GM12878 (cell line): ENCODE measurements at regions of chr2 and their contacts with region 1.

Region 1: GRCh38 chr2:196068271-196069209 is at the start of gene DNAH7:
- DNase-seq: peak; percentile 64
- ATAC-seq: peak; percentile 98
- H3K4me3 ChIP-seq: peak within 1 kb of the TSS; percentile 68
- H3K27ac ChIP-seq: peak within 1 kb of the TSS; percentile 43
- H3K4me1 ChIP-seq: no peaks in the 10 kb centered on the region; the same call in 1 of the 2 replicates
- H3K27me3 ChIP-seq: no peaks in the 10 kb centered on the region
- CTCF ChIP-seq: peak; percentile 91 to 98 (median 97); a peak in 5 of 6 replicates
- EP300 ChIP-seq: no peak; a peak in 1 of 4 replicates
- POLR2A ChIP-seq: peak; percentile 22; the same call in 1 of the 2 replicates
- RAD21 ChIP-seq: peak; percentile 92
- polyA plus RNA-seq, gene DNAH7: 0.05 to 0.14 TPM

Region 2: GRCh38 chr2:195410074-195410671 is 658.4 kb before region 1 on chr2:
- CTCF ChIA-PET with region 1: interaction called, 4 read pairs
- POLR2A ChIA-PET with region 1: no interaction called
- RAD21 ChIA-PET with region 1: no interaction called
- SMC1A ChIA-PET with region 1: no interaction called
- in situ Hi-C with region 1: no loop called
- intact Hi-C with region 1: loop called (anchors 5 kb)
- DNase-seq: peak; percentile 60
- ATAC-seq: peak; percentile 80
- H3K4me3 ChIP-seq: no peak overlapping the region
- H3K27ac ChIP-seq: peak overlapping the region; percentile 29
- H3K4me1 ChIP-seq: no peaks in the 10 kb centered on the region
- H3K27me3 ChIP-seq: no peaks in the 10 kb centered on the region
- CTCF ChIP-seq: no peak
- EP300 ChIP-seq: peak; percentile 68 to 83; a peak in 3 of 4 replicates
- POLR2A ChIP-seq: no peak
- RAD21 ChIP-seq: no peak

Region 3: GRCh38 chr2:195575879-195576401 is 492.6 kb before region 1 on chr2:
- CTCF ChIA-PET with region 1: interaction called, 73 read pairs
- POLR2A ChIA-PET with region 1: interaction called, 6 read pairs
- RAD21 ChIA-PET with region 1: interaction called, 40 read pairs
- SMC1A ChIA-PET with region 1: interaction called, 55 read pairs
- in situ Hi-C with region 1: loop called (anchors 10 kb)
- intact Hi-C with region 1: loop called (anchors 2 kb)
- DNase-seq: no peak
- ATAC-seq: peak; percentile 87
- H3K4me3 ChIP-seq: no peak overlapping the region
- H3K27ac ChIP-seq: no peak overlapping the region
- H3K4me1 ChIP-seq: no peaks in the 10 kb centered on the region; the same call in 1 of the 2 replicates
- H3K27me3 ChIP-seq: no peaks in the 10 kb centered on the region
- CTCF ChIP-seq: peak in 2 of 3 experiments; percentile 12 to 60; a peak in 3 of 6 replicates
- EP300 ChIP-seq: no peak
- POLR2A ChIP-seq: no peak
- RAD21 ChIP-seq: peak; percentile 54

Region 4: DNA sequence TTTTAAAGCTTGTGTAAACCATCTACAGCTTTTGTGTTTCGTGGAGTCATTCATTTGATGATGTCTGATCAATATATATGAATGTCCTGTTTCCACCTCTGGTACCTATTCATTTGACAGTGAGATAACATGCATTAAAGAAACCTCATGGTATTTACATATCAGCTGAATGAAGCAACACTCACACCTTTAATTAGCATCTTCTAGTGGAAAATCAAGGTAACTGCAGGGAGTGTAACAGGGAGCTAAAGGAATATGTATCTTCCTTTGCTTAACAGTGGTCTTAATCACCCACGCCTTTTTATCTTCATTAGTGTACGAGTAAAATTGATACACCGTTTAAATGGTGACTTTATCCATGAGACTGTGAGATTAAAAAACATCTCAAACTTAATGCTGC is 395.9 kb before region 1 on chr2:
- CTCF ChIA-PET with region 1: interaction called, 89 read pairs
- POLR2A ChIA-PET with region 1: no interaction called
- RAD21 ChIA-PET with region 1: interaction called, 32 read pairs
- SMC1A ChIA-PET with region 1: interaction called, 60 read pairs
- in situ Hi-C with region 1: no loop called
- intact Hi-C with region 1: no loop called
- DNase-seq: no peak
- ATAC-seq: no peak
- H3K4me3 ChIP-seq: no peak overlapping the region
- H3K27ac ChIP-seq: no peak overlapping the region
- H3K4me1 ChIP-seq: no peaks in the 10 kb centered on the region
- H3K27me3 ChIP-seq: no peaks in the 10 kb centered on the region
- CTCF ChIP-seq: peak in 2 of 3 experiments; percentile 15 to 22; a peak in 2 of 6 replicates
- EP300 ChIP-seq: no peak
- POLR2A ChIP-seq: no peak
- RAD21 ChIP-seq: no peak

Region 5: DNA sequence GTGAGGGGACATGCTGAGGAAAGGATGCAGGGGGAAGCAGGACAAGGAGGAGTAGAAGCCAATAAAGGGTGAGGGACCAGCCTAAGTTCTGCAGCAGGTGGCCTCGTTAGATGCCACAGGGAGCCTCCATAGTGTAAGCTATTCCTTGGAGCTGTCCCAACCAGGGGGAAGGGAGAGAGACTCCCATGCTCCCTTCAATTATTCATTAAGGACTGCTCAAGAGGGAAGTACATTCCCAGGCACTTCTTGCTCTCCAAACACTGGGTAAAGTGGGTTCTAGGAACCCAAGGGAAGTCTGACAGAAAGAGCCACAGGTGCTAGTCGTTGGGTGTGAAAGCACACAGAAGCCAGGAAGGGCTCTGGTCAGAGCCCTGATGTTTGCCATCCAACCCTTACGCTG is 217.8 kb before region 1 on chr2:
- CTCF ChIA-PET with region 1: interaction called, 5 read pairs
- POLR2A ChIA-PET with region 1: no interaction called
- RAD21 ChIA-PET with region 1: no interaction called
- SMC1A ChIA-PET with region 1: interaction called, 3 read pairs
- in situ Hi-C with region 1: no loop called
- intact Hi-C with region 1: loop called (anchors 5 kb)
- DNase-seq: no peak
- ATAC-seq: no peak
- H3K4me3 ChIP-seq: no peak overlapping the region
- H3K27ac ChIP-seq: no peak overlapping the region
- H3K4me1 ChIP-seq: no peaks in the 10 kb centered on the region
- H3K27me3 ChIP-seq: no peaks in the 10 kb centered on the region
- CTCF ChIP-seq: no peak
- EP300 ChIP-seq: no peak
- POLR2A ChIP-seq: no peak
- RAD21 ChIP-seq: no peak

Region 6: GRCh38 chr2:196046123-196046917 is 22.2 kb before region 1 on chr2:
- CTCF ChIA-PET with region 1: interaction called, 28 read pairs
- POLR2A ChIA-PET with region 1: no interaction called
- RAD21 ChIA-PET with region 1: interaction called, 13 read pairs
- SMC1A ChIA-PET with region 1: interaction called, 16 read pairs
- in situ Hi-C with region 1: no loop called
- intact Hi-C with region 1: no loop called
- DNase-seq: peak; percentile 45
- ATAC-seq: peak; percentile 94
- H3K4me3 ChIP-seq: no peak overlapping the region
- H3K27ac ChIP-seq: peak overlapping the region; percentile 54
- H3K4me1 ChIP-seq: peaks cover 7% of the 10 kb centered on the region
- H3K27me3 ChIP-seq: no peaks in the 10 kb centered on the region
- CTCF ChIP-seq: no peak
- EP300 ChIP-seq: no peak
- POLR2A ChIP-seq: no peak
- RAD21 ChIP-seq: no peak

Region 7: DNA sequence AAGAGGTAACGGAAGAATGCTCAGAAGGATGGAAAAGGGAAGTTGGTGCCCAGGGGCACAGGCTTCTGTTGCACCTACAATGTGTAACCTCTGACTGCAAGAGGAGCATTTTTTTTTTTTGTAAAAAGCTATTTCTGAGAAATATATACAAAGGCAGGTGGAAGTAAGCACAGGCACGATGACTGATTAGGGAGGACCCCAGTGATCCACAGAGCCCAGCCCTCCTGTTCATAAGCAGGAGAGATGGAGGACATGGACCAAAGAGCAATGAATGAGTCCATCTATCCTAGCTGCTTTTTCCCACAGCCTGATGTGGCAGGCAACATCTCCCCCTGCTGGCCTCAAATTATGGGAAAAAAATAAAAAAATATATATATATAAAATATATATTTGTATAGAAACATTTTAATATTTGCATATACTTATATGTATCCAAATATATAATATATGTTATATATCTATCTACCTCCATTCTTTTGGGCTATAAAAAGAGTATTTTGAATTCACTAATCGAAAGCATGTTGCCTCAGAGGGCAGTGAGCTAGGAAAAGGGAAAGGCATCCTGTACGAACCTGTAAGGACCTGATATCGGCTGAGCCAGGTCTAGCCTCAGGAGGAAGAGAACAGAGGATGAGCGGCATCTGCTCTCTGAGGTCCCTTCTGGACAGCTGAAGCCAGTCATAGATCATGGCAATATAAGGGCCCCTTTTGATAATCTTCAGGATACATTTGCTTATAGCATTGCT is 268.8 kb after region 1 on chr2:
- CTCF ChIA-PET with region 1: interaction called, 28 read pairs
- POLR2A ChIA-PET with region 1: no interaction called
- RAD21 ChIA-PET with region 1: interaction called, 18 read pairs
- SMC1A ChIA-PET with region 1: interaction called, 9 read pairs
- in situ Hi-C with region 1: no loop called
- intact Hi-C with region 1: no loop called
- DNase-seq: no peak
- ATAC-seq: peak; percentile 67
- H3K4me3 ChIP-seq: no peak overlapping the region
- H3K27ac ChIP-seq: peak overlapping the region; percentile 48
- H3K4me1 ChIP-seq: peaks cover 7% of the 10 kb centered on the region; the same call in 1 of the 2 replicates
- H3K27me3 ChIP-seq: no peaks in the 10 kb centered on the region
- CTCF ChIP-seq: peak in 2 of 3 experiments; percentile 28 to 40; a peak in 3 of 6 replicates
- EP300 ChIP-seq: no peak
- POLR2A ChIP-seq: no peak
- RAD21 ChIP-seq: peak; percentile 52